Ovary (tissue), 10 donors: ENCODE measurements at regions of chrX and their contacts with region 1.

Region 1: DNA sequence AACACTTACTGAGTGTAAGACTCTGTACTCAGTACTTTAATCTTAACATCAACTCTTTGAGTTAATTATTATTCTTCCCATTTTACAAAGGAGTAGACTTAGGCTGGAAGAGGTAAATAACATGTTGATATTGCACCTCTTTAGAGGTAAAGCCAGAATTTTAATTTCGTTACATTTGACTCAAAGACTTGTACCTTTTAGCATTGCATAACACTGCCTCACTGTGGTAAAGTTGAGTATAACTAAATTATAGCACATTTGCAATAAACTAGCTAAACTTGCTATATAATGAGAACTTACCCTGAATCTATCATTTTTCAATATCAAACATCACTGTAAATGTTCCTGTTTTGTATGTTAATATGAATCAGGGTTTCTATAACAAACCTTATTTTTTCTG is 218.5 kb downstream of the PRR32 start:
- DNase-seq: no peak
- H3K4me3 ChIP-seq: no peak overlapping the region
- H3K27ac ChIP-seq: no peak overlapping the region
- H3K4me1 ChIP-seq: no peaks in the 10 kb centered on the region
- H3K27me3 ChIP-seq: no peaks in the 10 kb centered on the region
- CTCF ChIP-seq: peak in 1 of 3 donors; percentile 54
- EP300 ChIP-seq: no peak
- POLR2A ChIP-seq: no peak

Region 2: DNA sequence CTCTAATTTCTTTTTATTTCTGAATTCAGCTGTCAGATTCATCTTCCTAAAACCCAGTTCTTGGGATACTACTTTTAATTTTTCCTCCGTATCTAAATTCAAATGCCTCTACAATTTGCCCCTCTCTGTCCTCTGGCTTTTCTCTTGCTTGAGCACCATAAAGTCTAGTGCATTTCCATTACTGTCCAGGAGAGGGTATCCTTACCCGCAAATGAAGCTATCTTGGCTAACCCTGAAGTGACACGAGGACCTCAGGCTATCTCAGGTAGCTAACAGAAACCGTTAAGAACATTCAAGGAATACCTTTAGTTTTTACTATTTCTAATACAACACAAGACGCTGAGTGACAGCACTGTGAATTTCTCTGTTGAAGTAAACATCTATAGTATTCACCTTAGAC is 267.9 kb before region 1 on chrX:
- intact Hi-C with region 1: loop called in 1 of 4 experiments (anchors 5 kb)
- DNase-seq: no peak
- H3K4me3 ChIP-seq: no peak overlapping the region
- H3K27ac ChIP-seq: no peak overlapping the region
- H3K4me1 ChIP-seq: no peaks in the 10 kb centered on the region
- H3K27me3 ChIP-seq: no peaks in the 10 kb centered on the region
- CTCF ChIP-seq: peak in 1 of 3 donors; percentile 14
- EP300 ChIP-seq: no peak
- POLR2A ChIP-seq: no peak

Region 3: GRCh38 chrX:126982158-126982557 is 55.9 kb before region 1 on chrX:
- intact Hi-C with region 1: no loop called
- DNase-seq: no peak
- H3K4me3 ChIP-seq: no peak overlapping the region
- H3K27ac ChIP-seq: no peak overlapping the region
- H3K4me1 ChIP-seq: no peaks in the 10 kb centered on the region
- H3K27me3 ChIP-seq: no peaks in the 10 kb centered on the region
- CTCF ChIP-seq: no peak
- EP300 ChIP-seq: no peak
- POLR2A ChIP-seq: no peak